ENCODE measurements at regions of chr3 and their contacts with region 1.

Region 1: DNA sequence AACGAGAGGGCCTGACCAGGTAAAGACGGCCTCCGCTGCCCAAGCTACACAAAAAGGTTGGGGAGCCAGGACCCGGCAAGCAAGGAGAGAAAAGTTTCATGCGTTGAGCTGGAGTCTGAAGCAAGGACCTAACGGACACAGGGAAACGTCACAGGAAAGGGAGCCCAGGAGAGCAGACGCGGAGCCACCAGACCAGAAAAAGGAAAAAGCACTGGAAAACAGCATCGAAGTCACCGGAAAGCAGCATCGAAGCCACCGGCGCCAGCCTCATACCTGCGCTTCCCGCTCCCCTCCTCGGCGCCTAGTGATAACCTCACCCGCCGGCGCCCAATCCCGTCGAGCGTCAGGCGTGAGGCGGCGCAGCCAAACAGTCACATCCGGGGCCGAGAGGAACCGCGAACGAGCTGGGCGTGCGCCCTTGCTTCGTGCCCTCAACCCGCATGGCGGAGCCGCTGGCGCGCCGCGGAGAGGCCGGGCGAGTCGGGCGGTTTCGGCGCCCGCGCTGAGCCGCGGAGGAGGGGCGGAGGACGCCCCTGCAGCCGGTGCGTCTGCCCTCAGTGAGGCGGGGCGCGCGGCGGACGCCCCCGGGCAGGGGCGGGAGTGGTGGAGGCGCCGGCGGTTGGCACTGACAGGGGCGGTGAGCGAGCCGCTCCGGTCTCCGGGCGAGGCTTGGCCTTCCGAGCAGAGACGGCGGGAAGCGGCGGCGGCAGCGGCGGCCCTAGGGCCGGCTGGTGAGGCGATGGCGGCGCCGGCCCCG is at the starts of genes FBXO45 and WDR53:
- DNase-seq: peak; percentile 94 to 96
- H3K4me3 ChIP-seq: peak within 1 kb of the TSS; percentile 96
- H3K4me3 Mint-ChIP-seq: peak within 1 kb of the TSS; percentile 83
- H3K27ac Mint-ChIP-seq: peak within 1 kb of the TSS; percentile 98
- H3K4me1 ChIP-seq: peaks cover 10% of the 10 kb centered on the region
- H3K4me1 Mint-ChIP-seq: peaks cover 5% of the 10 kb centered on the region
- H3K27me3 ChIP-seq: no peaks in the 10 kb centered on the region
- H3K27me3 Mint-ChIP-seq: no peaks in the 10 kb centered on the region
- CTCF ChIP-seq: no peak
- total RNA-seq, gene FBXO45: 14.5 and 15.8 TPM in 2 replicates
- total RNA-seq, gene WDR53: 12.1 and 17.8 TPM in 2 replicates

Region 2: GRCh38 chr3:196486263-196486662 is 82.2 kb before region 1 on chr3:
- CTCF ChIA-PET with region 1: no interaction called
- POLR2A ChIA-PET with region 1: no interaction called
- intact Hi-C with region 1: loop called (anchors 5 kb)
- DNase-seq: peak in 1 of 2 experiments; percentile 37
- H3K4me3 ChIP-seq: no peak overlapping the region
- H3K4me3 Mint-ChIP-seq: no peak overlapping the region
- H3K27ac Mint-ChIP-seq: no peak overlapping the region
- H3K4me1 ChIP-seq: no peaks in the 10 kb centered on the region
- H3K4me1 Mint-ChIP-seq: no peaks in the 10 kb centered on the region
- H3K27me3 ChIP-seq: no peaks in the 10 kb centered on the region
- H3K27me3 Mint-ChIP-seq: no peaks in the 10 kb centered on the region
- CTCF ChIP-seq: peak; percentile 31 to 51

Region 3: DNA sequence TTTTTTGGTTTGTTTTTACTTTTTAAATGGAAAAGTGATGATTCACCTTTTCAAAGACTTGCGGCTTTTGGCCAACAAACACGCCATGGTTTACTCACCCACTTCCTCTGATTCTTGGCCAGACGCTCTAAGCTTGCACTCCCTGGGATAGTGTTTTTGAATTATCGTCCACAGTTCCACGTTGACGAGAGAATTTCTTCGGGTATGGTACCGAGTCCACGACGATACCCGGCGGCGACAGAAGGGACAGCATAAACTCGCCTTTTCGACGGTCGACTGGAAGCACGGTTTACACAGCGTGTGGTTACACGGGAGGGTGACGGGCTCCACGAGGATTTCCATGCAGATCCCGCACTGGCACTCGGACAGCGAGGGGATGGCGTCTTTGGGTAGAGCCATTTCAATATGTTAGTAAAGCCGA is 65.6 kb before region 1 on chr3:
- CTCF ChIA-PET with region 1: no interaction called
- POLR2A ChIA-PET with region 1: no interaction called
- intact Hi-C with region 1: loop called (anchors 1 kb)
- DNase-seq: peak in 1 of 2 experiments; percentile 41
- H3K4me3 ChIP-seq: peak overlapping the region; percentile 92
- H3K4me3 Mint-ChIP-seq: peak overlapping the region; percentile 90
- H3K27ac Mint-ChIP-seq: peak overlapping the region; percentile 83
- H3K4me1 ChIP-seq: peaks cover 8% of the 10 kb centered on the region; the same call in 1 of the 2 replicates
- H3K4me1 Mint-ChIP-seq: peaks cover 6% of the 10 kb centered on the region
- H3K27me3 ChIP-seq: no peaks in the 10 kb centered on the region
- H3K27me3 Mint-ChIP-seq: no peaks in the 10 kb centered on the region
- CTCF ChIP-seq: no peak

Region 4: DNA sequence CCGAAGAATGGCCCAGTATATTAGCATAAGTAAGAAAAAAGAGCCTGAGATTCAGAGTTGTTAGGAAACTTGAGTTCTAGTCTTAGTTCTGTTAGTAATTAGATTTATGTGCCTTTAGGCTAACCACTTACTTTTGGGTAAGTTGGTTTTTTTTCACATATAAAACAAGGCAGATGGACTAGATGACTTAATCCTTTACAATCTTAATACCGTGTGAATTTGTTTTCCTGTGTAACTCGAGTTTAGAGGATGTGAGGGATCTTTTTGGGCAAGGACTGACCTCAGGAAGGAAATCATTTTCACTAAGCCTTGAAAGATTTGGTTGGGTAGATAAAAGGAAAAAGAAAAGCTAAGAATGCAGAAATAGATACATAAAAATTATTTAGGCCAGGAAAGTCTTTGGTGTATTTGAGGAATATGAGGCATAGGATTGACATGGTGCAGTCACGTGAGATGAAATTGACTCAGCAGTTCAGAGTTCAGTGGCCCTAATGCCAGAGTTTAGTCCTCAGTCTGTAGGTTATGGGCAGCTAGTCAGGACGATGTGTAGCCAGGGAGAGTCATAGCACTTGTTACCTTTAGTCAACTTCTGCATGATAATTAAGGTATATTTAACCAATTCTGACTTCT is 205.9 kb after region 1 on chr3:
- CTCF ChIA-PET with region 1: no interaction called
- POLR2A ChIA-PET with region 1: no interaction called
- intact Hi-C with region 1: no loop called
- DNase-seq: no peak
- H3K4me3 ChIP-seq: no peak overlapping the region
- H3K4me3 Mint-ChIP-seq: no peak overlapping the region
- H3K27ac Mint-ChIP-seq: peak overlapping the region; percentile 6
- H3K4me1 ChIP-seq: 0 out of 2 replicates have a peak, but pooled peaks cover 8% of the 10 kb centered on the region
- H3K4me1 Mint-ChIP-seq: peaks cover 9% of the 10 kb centered on the region
- H3K27me3 ChIP-seq: no peaks in the 10 kb centered on the region
- H3K27me3 Mint-ChIP-seq: no peaks in the 10 kb centered on the region
- CTCF ChIP-seq: no peak